ENCODE measurements at regions of chr17 and their contacts with region 1.

Region 1: DNA sequence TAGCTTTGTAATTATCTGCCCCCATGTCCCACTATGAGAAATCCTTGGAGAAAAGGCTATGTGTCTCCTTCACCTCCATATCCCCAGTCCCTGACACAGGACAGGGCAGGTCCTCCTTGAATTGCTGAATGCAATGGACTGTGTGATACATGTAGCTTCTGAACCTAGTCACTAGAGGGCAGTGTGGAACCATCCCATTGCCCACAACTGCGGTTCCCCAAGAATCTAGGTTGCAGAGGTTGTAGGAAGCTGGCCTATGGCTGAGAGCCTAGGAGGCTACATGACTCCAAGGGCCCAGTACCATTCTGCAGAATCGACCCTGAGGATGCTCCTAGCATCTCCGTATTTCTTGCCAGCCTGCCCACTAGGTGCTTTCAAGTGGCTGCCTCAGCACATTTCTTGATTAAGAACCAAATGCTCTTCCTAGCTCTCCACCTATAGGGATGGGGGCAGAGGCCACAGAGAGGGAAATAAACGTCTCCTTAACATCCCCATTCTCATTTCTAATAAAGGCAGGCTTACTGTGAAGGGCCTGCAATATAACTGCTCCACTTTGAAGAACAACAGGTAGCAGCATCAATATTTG is 394.0 kb downstream of the CA10 start:
- DNase-seq: peak; percentile 36
- H3K4me3 ChIP-seq: no peak overlapping the region
- H3K27ac ChIP-seq: no peak overlapping the region
- H3K4me1 ChIP-seq: no peaks in the 10 kb centered on the region
- H3K27me3 ChIP-seq: no peaks in the 10 kb centered on the region
- CTCF ChIP-seq: peak; percentile 72 to 75
- POLR2A ChIP-seq: no peak

Region 2: DNA sequence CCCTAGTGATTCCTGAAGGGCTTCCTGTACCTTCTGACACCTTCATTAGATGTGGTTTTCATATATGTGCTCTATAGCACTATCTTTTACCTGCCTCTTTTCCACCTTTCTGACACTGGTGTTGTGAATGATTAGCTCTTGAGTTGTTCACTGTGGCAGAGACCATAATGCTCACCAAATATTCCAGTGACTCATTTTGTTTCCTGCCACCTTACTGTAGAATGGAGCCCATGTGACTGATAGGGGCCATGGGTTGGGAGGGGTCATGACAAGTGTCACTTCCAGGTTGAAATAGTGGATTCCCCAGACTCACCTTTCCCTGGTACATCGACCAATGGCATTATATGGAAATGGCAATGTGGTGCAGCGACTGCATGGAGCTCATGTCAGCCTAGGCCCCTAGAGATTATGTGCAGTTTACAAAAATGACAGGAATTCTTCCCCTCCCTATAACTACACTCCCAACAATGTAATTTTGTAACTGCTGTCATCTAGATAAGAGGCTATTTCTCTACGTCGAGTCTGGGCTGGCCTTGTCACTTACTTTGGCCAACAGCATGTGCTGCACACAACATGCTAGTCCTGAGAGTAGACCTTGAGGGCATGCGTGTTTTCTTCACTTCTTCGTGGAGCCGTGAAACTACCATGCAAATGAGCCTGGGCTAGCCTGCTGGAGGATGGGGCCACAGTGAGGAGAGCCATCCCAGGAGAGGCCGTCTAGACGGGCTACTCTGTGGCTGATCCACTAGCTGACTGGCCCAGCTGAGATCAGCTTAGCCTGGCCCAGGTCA is 15.5 kb before region 1 on chr17:
- CTCF ChIA-PET with region 1: interaction called, 15 read pairs
- POLR2A ChIA-PET with region 1: no interaction called
- dilution Hi-C with region 1: no loop called
- intact Hi-C with region 1: no loop called
- DNase-seq: no peak
- H3K4me3 ChIP-seq: no peak overlapping the region
- H3K27ac ChIP-seq: no peak overlapping the region
- H3K4me1 ChIP-seq: no peaks in the 10 kb centered on the region
- H3K27me3 ChIP-seq: no peaks in the 10 kb centered on the region
- CTCF ChIP-seq: no peak
- POLR2A ChIP-seq: no peak

Region 3: GRCh38 chr17:52106638-52107261 is 342.3 kb after region 1 on chr17:
- CTCF ChIA-PET with region 1: no interaction called
- POLR2A ChIA-PET with region 1: no interaction called
- dilution Hi-C with region 1: no loop called
- intact Hi-C with region 1: loop called (anchors 1 kb)
- DNase-seq: peak; percentile 15
- H3K4me3 ChIP-seq: no peak overlapping the region
- H3K27ac ChIP-seq: no peak overlapping the region
- H3K4me1 ChIP-seq: no peaks in the 10 kb centered on the region
- H3K27me3 ChIP-seq: no peaks in the 10 kb centered on the region
- CTCF ChIP-seq: peak; percentile 54 to 62
- POLR2A ChIP-seq: no peak